ENCODE measurements at regions of chr14 and their contacts with region 1.

Region 1: DNA sequence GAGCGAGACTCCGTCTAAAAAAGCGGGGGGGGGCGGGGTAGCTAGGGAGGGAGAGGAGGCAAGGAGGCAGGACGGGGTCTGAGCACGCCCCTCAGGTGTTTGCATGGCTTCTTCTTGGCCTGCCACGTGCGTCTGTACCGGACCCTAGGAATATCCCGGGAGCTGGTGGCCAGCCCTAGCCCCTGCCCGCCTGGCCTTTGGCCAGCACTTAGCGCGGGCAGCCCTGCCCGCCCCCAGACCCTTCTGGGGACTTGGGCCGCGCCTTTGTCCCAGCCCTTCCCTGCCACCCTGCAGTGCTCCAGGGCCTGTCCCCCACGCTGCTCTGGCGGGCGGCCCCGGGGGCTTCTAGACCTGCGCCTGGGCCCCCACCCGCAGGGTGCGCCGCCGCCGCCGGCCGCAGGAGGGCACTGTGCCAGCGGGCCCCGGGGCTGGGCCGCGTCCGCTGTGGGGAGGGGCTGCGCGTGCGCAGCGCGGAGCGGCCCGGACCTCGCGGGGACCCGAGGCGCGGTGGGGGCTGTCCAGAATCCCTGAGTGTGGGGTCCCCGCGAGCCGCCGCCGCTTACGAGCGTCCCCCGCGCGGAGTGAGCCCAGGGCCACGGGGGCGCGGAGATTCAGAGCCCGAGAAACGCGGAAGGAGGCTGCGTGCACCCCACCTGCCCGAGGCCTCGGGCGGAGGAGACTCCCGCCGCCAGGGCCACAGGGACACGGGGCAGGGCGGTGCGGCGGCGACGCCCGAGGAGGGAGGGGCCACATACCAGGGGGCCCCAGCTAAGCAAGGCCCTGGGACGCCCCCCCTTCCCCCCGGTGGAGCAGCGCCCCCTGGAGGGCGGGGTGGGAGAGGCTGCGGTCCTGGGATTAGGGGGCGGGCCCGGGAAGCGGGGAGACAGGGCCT is 21.0 kb downstream of the SLC25A29 start:
- H3K4me3 ChIP-seq: peak overlapping the region; percentile 71
- H3K27ac ChIP-seq: peak overlapping the region; percentile 90
- H3K4me1 ChIP-seq: no peaks in the 10 kb centered on the region; the same call in 1 of the 2 replicates
- CTCF ChIP-seq: peak; percentile 96

Region 2: GRCh38 chr14:100239840-100240724 is 45.2 kb before region 1 on chr14:
- CTCF ChIA-PET with region 1: interaction called, 10 read pairs
- POLR2A ChIA-PET with region 1: no interaction called
- H3K4me3 ChIP-seq: peak overlapping the region; percentile 100
- H3K27ac ChIP-seq: peak overlapping the region; percentile 98
- H3K4me1 ChIP-seq: peaks cover 6% of the 10 kb centered on the region; the same call in 1 of the 2 replicates
- CTCF ChIP-seq: peak; percentile 59

Region 3: GRCh38 chr14:100297302-100298300 is 12.3 kb after region 1 on chr14:
- CTCF ChIA-PET with region 1: interaction called, 30 read pairs
- POLR2A ChIA-PET with region 1: no interaction called
- H3K4me3 ChIP-seq: no peak overlapping the region
- H3K27ac ChIP-seq: no peak overlapping the region
- H3K4me1 ChIP-seq: no peaks in the 10 kb centered on the region
- CTCF ChIP-seq: no peak

Region 4: DNA sequence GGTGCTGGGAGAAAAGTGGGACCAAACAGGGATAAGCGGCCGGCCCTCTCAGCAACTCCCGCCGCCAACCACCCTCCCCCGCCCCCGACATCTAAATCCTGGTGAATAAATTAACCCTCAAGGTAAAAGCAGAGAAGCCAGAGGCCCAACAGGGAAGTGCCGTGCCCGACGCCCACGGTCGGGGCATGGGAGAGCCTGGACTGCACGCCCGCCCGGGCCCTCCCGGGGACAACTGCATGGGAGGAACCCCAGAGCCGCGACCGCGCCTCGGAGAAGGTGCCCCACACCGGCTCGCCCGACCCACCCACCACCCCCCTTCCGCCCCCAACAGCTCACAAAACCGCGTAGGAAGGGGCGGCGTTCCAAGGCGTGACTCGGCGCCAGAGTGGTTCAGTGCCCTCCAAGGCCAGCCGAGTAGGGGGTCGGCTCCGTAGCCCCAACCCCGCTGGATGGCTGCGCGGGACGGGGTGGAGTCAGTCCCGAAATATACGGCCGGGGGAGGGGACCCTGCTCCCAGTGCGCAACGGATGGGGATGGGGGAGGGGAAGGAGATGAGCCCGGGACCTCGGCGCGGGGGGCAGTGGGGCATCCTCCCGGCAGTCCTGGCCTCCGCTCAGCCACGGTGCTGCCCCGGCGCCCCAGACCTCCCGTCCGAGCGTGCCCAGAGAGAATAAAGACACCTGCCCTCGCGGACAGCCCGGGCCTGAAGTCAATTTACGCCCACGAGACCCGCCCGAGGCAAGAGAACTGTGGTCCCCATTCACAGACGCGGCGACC is 20.2 kb after region 1 on chr14:
- CTCF ChIA-PET with region 1: interaction called, 15 read pairs
- POLR2A ChIA-PET with region 1: interaction called, 4 read pairs
- H3K4me3 ChIP-seq: peak overlapping the region; percentile 55
- H3K27ac ChIP-seq: peak overlapping the region; percentile 54; the same call in 1 of the 2 replicates
- H3K4me1 ChIP-seq: peaks cover 2% of the 10 kb centered on the region; the same call in 1 of the 2 replicates
- CTCF ChIP-seq: no peak

Measured in HEK293 (cell line).